ENCODE measurements at regions of chr4 and their contacts with region 1.

Region 1: DNA sequence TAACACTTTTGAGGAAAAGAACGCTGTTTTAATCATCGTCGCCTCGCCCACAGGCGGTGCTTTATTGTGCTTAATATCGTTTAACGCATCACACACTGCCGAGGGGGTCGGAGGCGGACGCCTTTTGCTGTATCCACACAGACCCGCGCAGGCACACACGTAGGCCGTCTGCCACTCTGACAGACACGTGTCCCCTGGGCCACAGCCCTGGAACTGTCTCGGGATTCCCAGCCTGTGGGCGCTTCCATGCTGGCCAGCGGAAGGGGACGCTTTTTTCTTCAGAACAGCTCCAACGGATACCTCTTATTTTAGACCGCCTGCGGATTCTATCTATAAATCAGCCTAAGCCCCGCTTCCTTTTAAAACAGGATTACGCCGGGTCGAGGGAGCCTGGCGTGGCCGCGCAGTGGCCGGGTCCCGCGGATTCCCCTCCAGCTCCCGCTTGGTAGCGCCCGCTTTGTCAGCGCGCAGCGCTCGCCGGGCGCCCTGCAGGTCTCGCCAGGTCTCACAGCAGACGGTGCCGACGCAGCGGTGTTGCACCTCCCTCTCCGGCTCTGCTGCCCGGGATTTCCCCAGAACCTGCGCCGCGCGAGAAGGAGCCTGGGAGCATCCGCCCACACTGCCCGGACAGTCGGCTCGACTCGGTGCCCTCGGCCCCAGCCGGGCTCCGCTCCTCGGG is at the start of gene NOCT:
- DNase-seq: peak; percentile 72 to 96 (median 89)
- ATAC-seq: peak; percentile 91 to 97 (median 96)
- H3K4me3 ChIP-seq: peak within 1 kb of the TSS; percentile 68 to 71
- H3K4me3 Mint-ChIP-seq: peak within 1 kb of the TSS; percentile 82 to 94 (median 86)
- H3K27ac ChIP-seq: peak within 1 kb of the TSS; percentile 89
- H3K27ac Mint-ChIP-seq: peak within 1 kb of the TSS; percentile 92 to 96
- H3K4me1 ChIP-seq: peaks cover 10 to 16% of the 10 kb centered on the region in 2 experiments
- H3K4me1 Mint-ChIP-seq: peaks cover 19 to 26% (median 23%) of the 10 kb centered on the region in 3 donors
- H3K27me3 ChIP-seq: no peaks in the 10 kb centered on the region
- H3K27me3 Mint-ChIP-seq: no peaks in the 10 kb centered on the region
- total RNA-seq, gene NOCT: 2.4 to 19.3 (median 3.1) TPM

Region 2: DNA sequence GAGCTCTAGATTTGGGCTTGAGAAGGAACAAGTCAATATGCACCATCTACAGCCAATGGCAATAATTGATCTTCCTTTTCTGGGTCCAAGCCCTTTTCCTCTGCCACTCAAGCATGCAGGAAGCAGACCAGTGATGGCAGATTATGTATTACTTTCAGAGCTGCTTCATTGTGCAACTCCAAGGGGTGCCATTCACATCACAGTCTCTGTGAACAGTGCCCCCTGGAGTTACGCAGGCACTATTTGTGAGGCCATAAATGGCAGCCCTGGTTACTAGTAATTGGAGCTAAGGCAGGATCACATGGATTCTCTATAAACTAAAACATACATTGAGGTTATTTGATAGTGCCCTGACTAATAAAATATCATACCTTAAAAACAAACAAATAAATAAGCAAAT is 459.8 kb before region 1 on chr4:
- CTCF ChIA-PET with region 1: no interaction called
- POLR2A ChIA-PET with region 1: no interaction called
- DNase-seq: no peak
- ATAC-seq: no peak
- H3K4me3 ChIP-seq: no peak overlapping the region
- H3K4me3 Mint-ChIP-seq: no peak overlapping the region
- H3K27ac ChIP-seq: no peak overlapping the region
- H3K27ac Mint-ChIP-seq: no peak overlapping the region
- H3K4me1 ChIP-seq: no peaks in the 10 kb centered on the region
- H3K4me1 Mint-ChIP-seq: no peaks in the 10 kb centered on the region
- H3K27me3 ChIP-seq: no peaks in the 10 kb centered on the region
- H3K27me3 Mint-ChIP-seq: no peaks in the 10 kb centered on the region

Region 3: GRCh38 chr4:138927072-138927471 is 88.3 kb before region 1 on chr4:
- CTCF ChIA-PET with region 1: no interaction called
- POLR2A ChIA-PET with region 1: no interaction called
- DNase-seq: no peak
- ATAC-seq: no peak
- H3K4me3 ChIP-seq: no peak overlapping the region
- H3K4me3 Mint-ChIP-seq: no peak overlapping the region
- H3K27ac ChIP-seq: no peak overlapping the region
- H3K27ac Mint-ChIP-seq: no peak overlapping the region
- H3K4me1 ChIP-seq: no peaks in the 10 kb centered on the region
- H3K4me1 Mint-ChIP-seq: no peaks in the 10 kb centered on the region
- H3K27me3 ChIP-seq: no peaks in the 10 kb centered on the region
- H3K27me3 Mint-ChIP-seq: peaks cover 0 to 3% of the 10 kb centered on the region in 2 donors

Region 4: DNA sequence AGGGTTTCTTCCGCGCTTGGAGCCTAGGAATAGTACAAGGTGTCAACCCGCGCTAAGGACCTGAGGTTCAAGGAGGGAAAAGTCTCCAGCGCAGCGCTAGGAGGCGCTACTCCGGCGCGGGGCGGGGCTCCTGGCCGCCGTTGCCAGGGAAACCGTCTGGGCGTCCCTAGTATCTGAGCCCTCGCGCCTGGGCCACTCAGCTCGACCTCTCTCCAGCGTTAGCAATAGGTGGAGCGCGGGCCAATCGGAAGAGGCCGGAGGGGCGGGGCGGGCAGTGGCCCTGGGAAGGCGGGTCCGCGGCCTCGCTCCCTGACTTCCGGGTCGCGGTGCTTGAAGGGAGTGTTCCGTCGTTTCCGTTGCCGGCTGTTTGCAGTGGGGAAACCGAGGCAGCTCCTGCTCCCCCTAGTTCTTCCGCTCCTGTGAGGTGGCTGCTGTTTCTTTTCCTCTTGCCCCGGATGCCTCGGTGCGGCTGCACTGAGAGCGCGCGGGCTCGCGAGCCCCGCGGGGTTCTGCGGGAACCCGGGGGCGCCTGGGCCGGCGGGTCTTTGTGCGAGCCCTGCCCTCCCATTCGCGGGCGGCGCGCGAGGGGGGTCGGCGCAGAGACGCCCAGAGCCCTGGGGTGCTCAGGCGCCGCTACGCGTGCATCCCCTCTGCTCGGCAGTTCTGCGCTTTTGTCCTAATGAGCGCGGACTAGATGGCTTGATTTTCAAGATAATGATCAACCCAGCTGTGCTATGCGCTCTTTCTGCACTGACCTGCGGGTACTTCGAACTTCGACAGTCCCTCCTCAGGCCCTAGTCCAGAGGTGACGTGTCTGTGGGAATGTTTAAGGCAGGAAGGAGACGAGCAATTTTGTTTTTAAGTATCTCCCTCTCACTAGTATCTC is 1508.7 kb after region 1 on chr4 and contains the start of gene ELMOD2:
- CTCF ChIA-PET with region 1: no interaction called
- POLR2A ChIA-PET with region 1: interaction called in 1 of 2 experiments, 13 read pairs
- DNase-seq: peak; percentile 91 to 99 (median 97)
- ATAC-seq: peak; percentile 98 to 100 (median 100)
- H3K4me3 ChIP-seq: peak within 1 kb of the TSS; percentile 80 to 86
- H3K4me3 Mint-ChIP-seq: peak within 1 kb of the TSS; percentile 81 to 84 (median 84)
- H3K27ac ChIP-seq: peak within 1 kb of the TSS; percentile 52
- H3K27ac Mint-ChIP-seq: peak within 1 kb of the TSS; percentile 68 to 86
- H3K4me1 ChIP-seq: peaks cover 11 to 12% of the 10 kb centered on the region in 2 experiments
- H3K4me1 Mint-ChIP-seq: peaks cover 23 to 33% (median 30%) of the 10 kb centered on the region in 3 donors
- H3K27me3 ChIP-seq: no peaks in the 10 kb centered on the region
- H3K27me3 Mint-ChIP-seq: no peaks in the 10 kb centered on the region
- total RNA-seq, gene ELMOD2: 11.1 to 22.8 (median 18.8) TPM

Measured in T-cell (primary cell).